Activated naive CD8-positive, alpha-beta T cell treated with anti-CD3 and anti-CD28 coated beads, Interleukin-2, amount 10 ng/mL, durations not matched to agents 7 days and 5 days (primary cell): ENCODE measurements at regions of chr10 and their contacts with region 1.

Region 1: DNA sequence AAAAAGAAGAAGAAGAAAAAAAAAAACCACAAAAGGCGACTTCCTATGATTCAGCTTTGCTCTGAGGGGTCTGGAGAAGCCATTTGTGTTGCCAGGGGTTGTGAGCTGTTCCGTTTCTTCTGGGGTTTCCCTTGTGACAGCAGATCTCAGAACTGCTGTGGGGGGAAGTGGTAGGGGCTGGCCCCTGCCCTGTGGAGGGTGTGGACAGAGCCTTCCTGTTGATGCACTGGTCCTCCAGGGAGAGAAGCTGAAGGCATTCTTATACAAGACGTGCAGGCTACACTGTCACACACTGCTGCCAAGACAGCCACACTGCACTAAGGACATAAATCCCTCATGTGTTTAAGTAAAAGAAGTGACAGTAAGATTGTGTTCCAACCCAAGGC is 17.3 kb upstream of the CSGALNACT2 start:
- DNase-seq: peak; percentile 71
- ATAC-seq: peak; percentile 98
- H3K4me3 Mint-ChIP-seq: peak overlapping the region; percentile 78
- H3K27ac Mint-ChIP-seq: peak overlapping the region; percentile 94
- H3K4me1 Mint-ChIP-seq: peaks cover 26% of the 10 kb centered on the region
- H3K27me3 Mint-ChIP-seq: no peaks in the 10 kb centered on the region

Region 2: DNA sequence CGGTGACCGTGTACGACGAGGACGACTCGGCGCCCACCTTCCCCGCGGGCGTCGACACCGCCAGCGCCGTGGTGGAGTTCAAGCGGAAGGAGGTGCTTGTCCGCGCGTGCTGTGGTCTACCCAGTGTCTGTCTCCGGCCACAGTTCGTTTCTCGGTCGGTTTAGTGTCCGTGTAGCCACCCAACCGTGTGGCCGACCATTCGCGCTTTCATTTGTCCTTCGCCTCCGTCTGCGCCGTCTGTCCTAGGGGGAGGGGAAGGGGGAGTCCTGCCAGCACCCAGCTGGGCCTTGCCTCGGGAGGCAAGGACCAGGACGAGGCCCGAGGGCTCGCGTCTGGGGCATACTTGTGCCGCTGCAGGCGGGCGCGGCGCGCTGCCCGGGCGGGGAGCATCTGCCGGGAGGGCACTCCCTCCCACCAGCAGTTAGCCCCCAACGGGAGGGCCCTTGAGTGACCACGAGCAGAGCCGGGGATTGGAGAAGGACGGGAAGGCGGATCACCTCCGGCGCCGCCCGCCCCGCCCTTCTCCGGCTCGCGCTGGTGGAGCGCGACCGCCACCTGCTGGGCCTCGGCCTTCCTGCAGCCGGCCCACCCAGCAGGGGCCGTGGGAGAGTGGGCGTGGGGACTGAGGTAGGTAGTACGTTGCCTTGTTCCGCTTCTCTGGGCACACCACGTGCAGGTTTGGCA is 15.7 kb before region 1 on chr10:
- POLR2A ChIA-PET with region 1: no interaction called
- DNase-seq: peak; percentile 91
- ATAC-seq: peak; percentile 83
- H3K4me3 Mint-ChIP-seq: peak overlapping the region; percentile 77
- H3K27ac Mint-ChIP-seq: peak overlapping the region; percentile 60
- H3K4me1 Mint-ChIP-seq: peaks cover 9% of the 10 kb centered on the region
- H3K27me3 Mint-ChIP-seq: peaks cover 24% of the 10 kb centered on the region

Region 3: DNA sequence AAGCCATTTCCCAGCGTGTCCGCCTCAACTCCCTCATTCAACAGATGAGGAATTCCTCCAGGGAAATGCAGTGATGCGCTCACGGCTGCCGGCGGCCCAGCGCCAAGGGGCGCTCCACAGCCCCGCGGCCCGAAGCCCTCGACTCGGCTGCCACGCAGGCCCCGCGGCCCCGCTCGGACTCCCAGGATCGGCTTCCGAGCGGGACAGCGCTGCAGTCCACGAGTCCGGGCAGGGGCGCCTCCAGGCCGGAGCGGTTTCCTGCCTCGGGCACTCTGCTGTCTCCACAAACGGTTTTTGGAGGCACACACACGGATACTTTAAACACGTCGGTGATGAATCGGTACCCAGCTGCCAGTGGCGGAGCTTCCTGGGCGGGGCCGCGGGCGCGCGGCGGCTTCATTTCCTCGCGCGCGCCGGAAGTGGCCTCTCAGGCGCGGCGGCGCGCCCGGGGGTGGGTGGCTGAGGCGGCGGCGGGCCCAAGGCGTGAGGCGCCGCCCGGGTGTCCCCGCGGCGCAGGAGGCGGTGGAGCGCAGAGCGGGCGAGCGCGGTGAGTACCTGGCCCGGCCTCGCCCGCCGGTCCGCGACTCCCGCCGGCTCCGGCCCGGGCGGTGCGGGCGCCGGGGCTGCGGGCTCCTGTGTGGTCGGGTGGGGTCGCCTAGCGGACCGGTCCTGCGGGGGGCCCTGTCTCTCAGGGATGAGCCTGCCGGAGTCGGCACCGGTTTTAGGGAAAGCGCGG is 17.3 kb after region 1 on chr10 and contains the start of gene CSGALNACT2:
- POLR2A ChIA-PET with region 1: interaction called, 175 read pairs
- DNase-seq: peak; percentile 96
- ATAC-seq: peak; percentile 81
- H3K4me3 Mint-ChIP-seq: peak within 1 kb of the TSS; percentile 96
- H3K27ac Mint-ChIP-seq: peak within 1 kb of the TSS; percentile 99
- H3K4me1 Mint-ChIP-seq: peaks cover 47% of the 10 kb centered on the region
- H3K27me3 Mint-ChIP-seq: no peaks in the 10 kb centered on the region
- total RNA-seq, gene CSGALNACT2: 37.2 to 39.5 TPM